Activated CD4-positive, alpha-beta T cell treated with anti-CD3 and anti-CD28 coated beads, Interleukin-2, amount 10 ng/mL, durations not matched to agents 24 days and 14 days (primary cell): ENCODE measurements at regions of chr1 and their contacts with region 1.

Region 1: GRCh38 chr1:152189657-152190442 is 30.8 kb upstream of the RPTN start:
- DNase-seq: peak; percentile 87
- H3K4me3 Mint-ChIP-seq: peak overlapping the region; percentile 62
- H3K27ac Mint-ChIP-seq: no peak overlapping the region
- H3K4me1 Mint-ChIP-seq: peaks cover 8% of the 10 kb centered on the region
- H3K27me3 Mint-ChIP-seq: peaks cover 33% of the 10 kb centered on the region

Region 2: GRCh38 chr1:152110860-152111514 is 78.9 kb before region 1 on chr1:
- intact Hi-C with region 1: loop called (anchors 2 kb)
- DNase-seq: peak; percentile 81
- H3K4me3 Mint-ChIP-seq: no peak overlapping the region
- H3K27ac Mint-ChIP-seq: no peak overlapping the region
- H3K4me1 Mint-ChIP-seq: no peaks in the 10 kb centered on the region
- H3K27me3 Mint-ChIP-seq: peaks cover 9% of the 10 kb centered on the region

Region 3: DNA sequence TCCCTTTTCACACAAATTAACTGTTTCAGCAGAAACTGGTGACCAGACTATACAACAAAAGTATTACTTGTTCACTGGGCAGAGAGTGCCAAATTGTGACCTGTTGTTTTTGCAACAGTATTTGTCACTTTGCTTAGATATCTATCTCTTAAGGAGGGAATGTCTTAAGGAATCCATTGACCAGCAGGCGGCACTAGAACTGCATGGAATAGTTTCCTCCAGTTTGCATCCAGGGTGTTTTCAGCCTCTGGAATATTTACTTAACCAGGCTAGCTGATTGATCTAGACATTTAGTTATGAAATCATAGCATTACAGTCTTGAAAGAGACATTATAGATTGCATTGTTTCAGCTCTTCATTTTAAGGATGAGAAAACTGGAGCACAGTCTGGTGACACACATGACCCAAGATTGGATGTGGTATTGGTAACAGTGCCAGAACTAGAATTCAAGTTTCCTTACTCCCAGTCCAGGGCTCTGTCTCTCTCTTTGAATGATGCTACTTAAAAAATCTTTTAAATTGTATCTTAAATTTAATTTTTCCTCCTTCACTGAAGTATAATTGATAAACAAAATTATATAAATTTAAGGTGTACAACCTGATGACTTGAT is 47.8 kb before region 1 on chr1:
- intact Hi-C with region 1: loop called (anchors 1 kb)
- DNase-seq: peak; percentile 57
- H3K4me3 Mint-ChIP-seq: no peak overlapping the region
- H3K27ac Mint-ChIP-seq: no peak overlapping the region
- H3K4me1 Mint-ChIP-seq: peaks cover 4% of the 10 kb centered on the region
- H3K27me3 Mint-ChIP-seq: peaks cover 35% of the 10 kb centered on the region

Region 4: DNA sequence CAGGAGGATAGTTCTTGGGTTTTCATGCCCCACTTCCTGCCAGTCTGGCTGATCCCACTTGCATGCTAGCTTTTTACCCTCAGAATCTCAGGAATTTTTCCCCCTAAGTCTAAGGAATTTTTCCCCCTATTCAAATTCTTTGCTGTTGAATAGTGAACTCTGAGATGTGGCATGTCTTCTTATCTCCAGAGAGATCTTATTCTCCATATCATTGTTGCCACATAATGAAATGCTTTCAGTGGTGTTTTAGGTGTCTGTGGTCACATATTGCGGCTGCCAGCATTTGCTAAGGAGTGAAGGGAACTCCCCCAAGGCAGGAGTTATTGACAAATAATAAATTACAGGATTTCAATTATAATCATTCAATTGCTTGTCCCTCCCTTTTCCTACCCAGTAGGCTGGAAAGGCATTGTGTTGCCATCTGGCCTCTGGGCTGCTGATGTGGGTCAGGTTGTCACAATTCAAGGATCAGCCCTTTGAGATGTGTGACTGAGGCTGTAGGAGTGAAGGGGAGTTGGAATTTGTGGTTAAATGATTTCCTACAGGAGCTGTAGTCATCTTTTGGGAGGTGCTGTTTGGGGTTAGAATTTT is 139.0 kb after region 1 on chr1:
- intact Hi-C with region 1: no loop called
- DNase-seq: no peak
- H3K4me3 Mint-ChIP-seq: no peak overlapping the region
- H3K27ac Mint-ChIP-seq: no peak overlapping the region
- H3K4me1 Mint-ChIP-seq: no peaks in the 10 kb centered on the region
- H3K27me3 Mint-ChIP-seq: peaks cover 15% of the 10 kb centered on the region

Region 5: DNA sequence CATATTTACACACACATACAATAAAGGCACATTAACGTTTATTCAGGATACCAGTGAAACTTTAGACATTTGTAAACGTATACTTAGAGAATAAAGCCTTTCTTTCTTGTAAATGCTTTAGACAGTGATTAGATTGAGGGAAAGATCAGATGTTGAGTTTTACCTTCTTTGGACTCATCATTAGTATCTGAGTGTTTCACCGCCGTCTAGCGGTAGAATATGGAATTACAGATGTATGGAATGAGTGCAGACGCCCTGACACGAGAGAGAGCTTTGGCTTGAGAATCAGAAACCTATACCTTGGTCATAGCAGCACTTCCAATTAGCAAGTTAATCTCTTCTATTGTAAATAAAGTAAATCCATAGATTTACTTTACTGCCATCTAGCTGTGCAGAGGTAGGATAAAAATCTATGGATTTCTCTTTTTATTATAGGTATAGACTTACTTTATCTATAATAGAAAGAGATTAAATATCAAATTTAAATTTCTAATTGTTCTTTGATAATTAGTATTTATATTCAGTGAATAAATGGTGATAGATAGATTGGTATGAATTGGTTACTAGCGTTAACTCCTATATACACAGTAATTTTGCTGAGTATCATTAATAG is 157.4 kb after region 1 on chr1:
- intact Hi-C with region 1: loop called (anchors 1 kb)
- DNase-seq: peak; percentile 88
- H3K4me3 Mint-ChIP-seq: no peak overlapping the region
- H3K27ac Mint-ChIP-seq: no peak overlapping the region
- H3K4me1 Mint-ChIP-seq: no peaks in the 10 kb centered on the region
- H3K27me3 Mint-ChIP-seq: peaks cover 29% of the 10 kb centered on the region

Region 6: GRCh38 chr1:152440635-152441471 is 251.0 kb after region 1 on chr1:
- intact Hi-C with region 1: loop called (anchors 1 kb)
- DNase-seq: peak; percentile 89
- H3K4me3 Mint-ChIP-seq: no peak overlapping the region
- H3K27ac Mint-ChIP-seq: no peak overlapping the region
- H3K4me1 Mint-ChIP-seq: no peaks in the 10 kb centered on the region
- H3K27me3 Mint-ChIP-seq: peaks cover 22% of the 10 kb centered on the region

Region 7: GRCh38 chr1:152459596-152460528 is 270.0 kb after region 1 on chr1:
- intact Hi-C with region 1: loop called (anchors 1 kb)
- DNase-seq: peak; percentile 89
- H3K4me3 Mint-ChIP-seq: peak overlapping the region; percentile 39
- H3K27ac Mint-ChIP-seq: peak overlapping the region; percentile 75
- H3K4me1 Mint-ChIP-seq: peaks cover 23% of the 10 kb centered on the region
- H3K27me3 Mint-ChIP-seq: peaks cover 19% of the 10 kb centered on the region